ENCODE measurements at regions of chr20 and their contacts with region 1.

Region 1: GRCh38 chr20:43749734-43750294 is 23.0 kb upstream of the GTSF1L start:
- DNase-seq: peak; percentile 49
- H3K4me3 ChIP-seq: no peak overlapping the region
- H3K27ac ChIP-seq: no peak overlapping the region
- H3K4me1 ChIP-seq: no peaks in the 10 kb centered on the region
- H3K27me3 ChIP-seq: peaks cover 6% of the 10 kb centered on the region
- CTCF ChIP-seq: peak; percentile 96 to 100 (median 98)
- POLR2A ChIP-seq: no peak

Region 2: GRCh38 chr20:43840382-43841070 is 90.7 kb after region 1 on chr20:
- intact Hi-C with region 1: loop called (anchors 10 kb)
- DNase-seq: no peak
- H3K4me3 ChIP-seq: no peak overlapping the region
- H3K27ac ChIP-seq: no peak overlapping the region
- H3K4me1 ChIP-seq: no peaks in the 10 kb centered on the region
- H3K27me3 ChIP-seq: peaks cover 5% of the 10 kb centered on the region
- CTCF ChIP-seq: no peak
- POLR2A ChIP-seq: no peak

Measured in prostate gland (tissue), 2 donors.